Mammary epithelial cell (primary cell): ENCODE measurements at regions of chr4 and their contacts with region 1.

Region 1: GRCh38 chr4:140012688-140013486 is 141.1 kb downstream of the MAML3 start:
- DNase-seq: peak; percentile 71
- H3K4me3 ChIP-seq: no peak overlapping the region
- H3K27ac ChIP-seq: no peak overlapping the region
- H3K4me1 ChIP-seq: no peaks in the 10 kb centered on the region
- H3K27me3 ChIP-seq: peaks cover 2% of the 10 kb centered on the region
- CTCF ChIP-seq: peak; percentile 62 to 64

Region 2: DNA sequence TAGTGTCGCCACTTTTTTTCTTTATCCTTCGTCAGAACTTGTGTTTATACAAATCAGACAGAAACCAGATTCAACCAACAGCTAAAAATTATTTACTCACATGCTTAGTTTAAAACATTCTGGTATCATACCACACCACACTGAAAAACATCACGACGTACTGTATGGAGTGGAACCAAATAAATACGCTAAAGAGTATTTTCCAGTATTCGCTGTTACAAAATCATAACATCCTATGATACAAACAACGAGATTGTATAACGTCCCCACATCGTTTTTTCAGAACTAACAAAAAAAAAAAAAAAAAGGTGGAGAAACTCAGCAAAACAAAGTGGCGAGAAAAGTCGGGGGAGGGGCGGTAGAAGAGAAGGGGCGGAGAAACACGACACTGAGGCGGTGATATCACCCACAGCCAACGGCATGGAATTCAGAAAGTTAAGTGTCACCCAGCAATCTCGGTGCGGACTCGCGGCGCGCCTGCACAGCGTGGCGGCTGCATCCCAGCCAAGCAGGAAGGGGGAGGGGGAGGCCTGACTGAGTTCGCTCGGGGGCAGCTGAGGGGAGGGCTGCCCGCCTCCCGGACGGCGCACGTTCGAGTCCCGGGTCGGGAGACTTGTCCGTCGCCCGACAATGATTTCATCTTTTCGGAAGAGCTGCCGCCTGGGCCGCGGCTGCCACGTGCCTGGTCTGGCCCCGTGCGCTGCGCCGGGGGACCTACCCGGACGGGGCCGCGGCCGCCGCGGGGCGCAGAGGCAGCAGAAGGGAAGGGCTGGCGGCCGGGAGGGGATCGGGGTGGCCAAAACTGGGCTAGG is 457.8 kb before region 1 on chr4:
- CTCF ChIA-PET with region 1: no interaction called
- dilution Hi-C with region 1: no loop called
- in situ Hi-C with region 1: no loop called
- intact Hi-C with region 1: no loop called
- DNase-seq: peak; percentile 81
- H3K4me3 ChIP-seq: peak overlapping the region; percentile 77 to 91 (median 90)
- H3K27ac ChIP-seq: peak overlapping the region; percentile 63
- H3K4me1 ChIP-seq: peaks cover 17% of the 10 kb centered on the region
- H3K27me3 ChIP-seq: peaks cover 5% of the 10 kb centered on the region
- CTCF ChIP-seq: no peak

Region 3: DNA sequence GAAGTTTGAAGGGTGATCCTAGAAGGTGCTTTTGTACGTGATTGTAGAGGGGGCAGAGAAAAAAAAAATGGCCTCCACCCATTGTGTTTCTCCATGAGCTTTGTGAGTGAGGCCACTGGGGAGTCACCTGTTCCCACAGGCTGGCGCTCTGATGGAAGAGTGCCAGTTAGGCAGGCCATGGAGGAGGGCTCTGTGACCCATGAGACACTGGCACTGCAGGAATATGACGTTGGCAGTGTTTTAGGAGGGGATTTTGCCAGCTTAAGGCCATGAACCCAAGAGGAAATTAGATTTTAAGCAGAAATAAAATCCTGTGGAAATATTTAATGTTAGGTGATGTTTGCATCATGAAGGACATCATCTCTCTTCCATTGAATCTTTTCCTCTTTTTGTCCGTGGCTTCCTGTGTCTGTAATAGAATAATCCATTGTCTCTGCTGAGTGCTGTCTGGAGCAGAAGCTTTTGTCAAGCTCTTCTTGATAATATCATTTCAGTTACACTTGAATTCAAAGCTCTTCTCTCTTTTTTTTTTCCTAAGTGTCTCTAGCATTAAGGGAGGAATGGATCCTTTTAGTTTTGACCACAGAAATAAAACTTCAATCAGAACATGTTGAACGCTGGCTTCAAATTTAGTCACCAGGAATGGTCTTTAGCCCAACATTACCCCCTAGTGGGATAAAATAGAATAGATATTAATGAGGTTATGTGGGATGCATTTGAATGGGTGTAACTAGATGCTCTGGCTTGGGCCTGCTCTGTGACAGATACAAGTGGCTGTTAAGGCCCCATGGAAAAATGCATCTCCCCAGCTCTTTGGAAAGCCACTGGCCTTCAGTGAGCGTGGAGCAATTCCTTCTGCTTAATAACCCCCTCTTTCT is 596.9 kb after region 1 on chr4:
- CTCF ChIA-PET with region 1: no interaction called
- dilution Hi-C with region 1: no loop called
- in situ Hi-C with region 1: no loop called
- intact Hi-C with region 1: loop called (anchors 10 kb)
- DNase-seq: peak; percentile 45
- H3K4me3 ChIP-seq: no peak overlapping the region
- H3K27ac ChIP-seq: no peak overlapping the region
- H3K4me1 ChIP-seq: no peaks in the 10 kb centered on the region
- H3K27me3 ChIP-seq: peaks cover 2% of the 10 kb centered on the region
- CTCF ChIP-seq: peak; percentile 47 to 56